Upper lobe of right lung (tissue), 1 donor: ENCODE measurements at regions of chr15 and their contacts with region 1.

Region 1: DNA sequence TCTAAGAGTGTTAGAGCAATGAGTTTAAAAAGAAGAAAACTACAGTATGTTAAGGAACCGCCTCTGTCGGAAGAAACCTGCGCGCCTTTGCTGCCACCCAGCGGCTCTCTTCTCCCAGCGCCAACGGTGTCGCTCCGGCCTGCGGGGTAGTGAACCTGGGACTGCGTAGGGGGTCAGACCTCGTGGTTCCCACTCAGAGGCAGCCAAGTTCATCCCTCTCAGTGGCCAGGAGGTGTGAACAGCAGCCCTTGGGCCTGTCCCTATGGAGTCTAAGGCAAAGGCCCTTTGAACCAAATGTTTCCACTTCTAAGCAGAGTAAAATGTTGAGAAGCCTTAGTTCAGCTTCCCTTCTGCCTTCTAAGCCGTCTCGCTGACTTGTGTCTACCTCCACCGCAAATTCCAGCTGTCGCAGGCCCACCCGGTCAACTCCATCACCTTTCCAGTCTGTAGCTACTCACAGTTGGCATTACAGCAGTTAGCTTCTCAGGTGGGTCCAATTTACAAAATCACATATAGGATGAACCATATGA is 980 bp upstream of the RAB27A start:
- DNase-seq: peak; percentile 93
- ATAC-seq: peak; percentile 90
- H3K4me3 ChIP-seq: peak overlapping the region; percentile 80
- H3K27ac ChIP-seq: peak overlapping the region; percentile 94
- H3K4me1 ChIP-seq: peaks cover 4% of the 10 kb centered on the region
- H3K27me3 ChIP-seq: no peaks in the 10 kb centered on the region
- CTCF ChIP-seq: peak; percentile 94

Region 2: DNA sequence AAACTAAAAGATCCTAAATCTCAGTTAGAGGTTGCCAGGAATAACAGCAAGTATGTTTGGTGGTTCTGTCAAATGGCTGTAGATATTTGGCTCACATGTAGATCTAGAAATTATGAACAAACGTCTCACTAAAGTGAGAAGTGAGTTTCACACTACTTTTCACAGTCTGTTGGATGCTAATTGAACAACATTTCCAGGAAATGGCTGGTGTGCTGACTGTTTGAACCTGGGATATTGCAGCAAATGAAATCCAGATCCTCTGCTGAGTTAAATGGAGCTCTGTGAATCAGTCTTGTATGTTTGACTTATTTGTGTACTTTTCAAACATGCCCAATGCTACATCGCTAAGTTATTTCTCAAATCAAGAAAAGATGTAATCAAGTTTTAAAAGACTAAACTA is 72.5 kb before region 1 on chr15:
- intact Hi-C with region 1: loop called (anchors 5 kb)
- DNase-seq: no peak
- ATAC-seq: no peak
- H3K4me3 ChIP-seq: no peak overlapping the region
- H3K27ac ChIP-seq: no peak overlapping the region
- H3K4me1 ChIP-seq: peaks cover 27% of the 10 kb centered on the region
- H3K27me3 ChIP-seq: no peaks in the 10 kb centered on the region
- CTCF ChIP-seq: no peak